ENCODE measurements at regions of chr12 and their contacts with region 1.

Region 1: DNA sequence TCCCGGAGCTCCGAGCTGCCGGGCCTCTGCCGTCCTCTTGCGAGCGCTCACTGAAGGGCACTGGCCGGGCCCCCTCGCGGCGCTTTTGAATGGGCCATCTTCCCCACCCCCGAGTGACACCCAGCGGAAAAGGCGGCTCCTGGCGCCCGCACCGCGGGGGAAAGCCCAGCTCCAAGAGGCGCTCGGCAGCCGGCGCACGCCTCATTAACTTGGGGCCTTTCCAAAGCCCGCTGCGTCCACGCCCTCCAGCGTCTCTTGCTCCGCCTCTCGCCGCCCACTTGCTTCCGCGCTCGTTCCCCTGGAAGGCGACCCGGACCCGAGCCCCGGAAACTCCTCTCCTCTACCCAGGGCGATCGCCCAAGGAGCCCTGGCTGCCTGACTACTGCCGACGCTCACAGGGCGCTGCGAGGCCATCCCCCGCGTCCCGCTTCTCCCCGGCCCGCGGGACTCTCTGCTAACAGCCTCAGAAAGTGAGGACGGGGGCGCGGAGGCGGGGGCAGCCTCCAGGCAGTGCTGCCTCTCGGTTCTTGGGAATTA is at the start of gene PHLDA1:
- DNase-seq: no peak
- ATAC-seq: peak; percentile 81
- H3K4me3 ChIP-seq: peak within 1 kb of the TSS; percentile 79 to 93
- H3K27ac ChIP-seq: peak within 1 kb of the TSS; percentile 100
- H3K4me1 ChIP-seq: peaks cover 32% of the 10 kb centered on the region
- H3K27me3 ChIP-seq: no peaks in the 10 kb centered on the region
- CTCF ChIP-seq: peak; percentile 65
- total RNA-seq, gene PHLDA1: 159 TPM

Region 2: GRCh38 chr12:75081305-75081704 is 950.3 kb before region 1 on chr12:
- CTCF ChIA-PET with region 1: no interaction called
- POLR2A ChIA-PET with region 1: interaction called, 12 read pairs
- in situ Hi-C with region 1: no loop called
- intact Hi-C with region 1: no loop called
- DNase-seq: no peak
- ATAC-seq: no peak
- H3K4me3 ChIP-seq: no peak overlapping the region
- H3K27ac ChIP-seq: no peak overlapping the region
- H3K4me1 ChIP-seq: no peaks in the 10 kb centered on the region
- H3K27me3 ChIP-seq: no peaks in the 10 kb centered on the region
- CTCF ChIP-seq: no peak

Region 3: DNA sequence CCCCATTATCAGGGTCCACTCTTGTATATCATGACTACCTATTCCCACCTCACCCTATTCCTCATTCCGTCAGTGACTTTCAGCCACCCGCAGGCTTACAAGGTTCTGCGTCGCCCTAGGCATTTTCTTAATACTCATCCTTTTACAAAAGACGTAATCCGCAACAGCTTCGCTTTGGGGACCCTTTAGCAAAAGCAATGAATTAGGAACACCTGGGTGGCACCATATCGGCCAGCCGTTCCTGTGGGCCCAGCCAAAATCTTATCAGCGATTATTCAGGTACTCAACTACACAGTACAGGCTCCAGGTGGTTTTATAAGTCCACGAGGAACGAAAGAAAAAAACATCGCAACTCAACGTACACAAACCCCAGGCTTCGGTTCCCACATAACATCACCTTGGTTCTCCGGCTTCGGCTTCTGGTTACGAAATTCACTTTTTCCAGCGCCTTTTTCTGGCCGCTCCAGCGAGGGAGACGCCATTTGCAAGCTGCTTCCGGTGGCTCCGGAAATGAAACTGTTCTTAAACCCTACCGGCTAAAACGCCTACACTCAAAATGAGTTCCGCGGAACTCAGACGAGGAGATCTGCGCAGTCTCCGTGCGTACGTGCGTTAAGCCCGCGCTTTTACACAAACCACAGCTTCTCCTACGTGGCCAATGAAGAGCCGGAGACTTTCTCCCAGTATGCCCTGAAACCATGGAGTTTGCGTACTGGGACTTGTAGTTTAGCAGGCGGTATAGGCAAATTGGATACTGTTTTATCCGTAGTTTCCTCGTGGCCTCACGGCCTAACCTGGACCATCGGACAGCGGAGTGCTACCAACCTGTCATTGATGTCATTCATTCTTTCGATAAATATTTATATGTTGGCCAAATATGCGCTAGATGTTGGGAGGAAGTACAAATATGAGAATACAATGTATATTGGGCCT is 520.2 kb before region 1 on chr12 and contains the start of gene KRR1:
- CTCF ChIA-PET with region 1: no interaction called
- POLR2A ChIA-PET with region 1: interaction called, 7 read pairs
- in situ Hi-C with region 1: no loop called
- intact Hi-C with region 1: loop called (anchors 5 kb)
- DNase-seq: peak; percentile 93
- ATAC-seq: peak; percentile 97
- H3K4me3 ChIP-seq: peak within 1 kb of the TSS; percentile 84 to 99
- H3K27ac ChIP-seq: peak within 1 kb of the TSS; percentile 100
- H3K4me1 ChIP-seq: peaks cover 38% of the 10 kb centered on the region
- H3K27me3 ChIP-seq: no peaks in the 10 kb centered on the region
- CTCF ChIP-seq: no peak
- total RNA-seq, gene KRR1: 161 TPM

Region 4: GRCh38 chr12:75526655-75527511 is 504.7 kb before region 1 on chr12:
- CTCF ChIA-PET with region 1: interaction called, 3 read pairs
- POLR2A ChIA-PET with region 1: interaction called, 3 read pairs
- in situ Hi-C with region 1: no loop called
- intact Hi-C with region 1: loop called (anchors 5 kb)
- DNase-seq: no peak
- ATAC-seq: peak; percentile 92
- H3K4me3 ChIP-seq: no peak overlapping the region
- H3K27ac ChIP-seq: peak overlapping the region; percentile 78
- H3K4me1 ChIP-seq: peaks cover 13% of the 10 kb centered on the region
- H3K27me3 ChIP-seq: no peaks in the 10 kb centered on the region
- CTCF ChIP-seq: peak; percentile 71

Region 5: DNA sequence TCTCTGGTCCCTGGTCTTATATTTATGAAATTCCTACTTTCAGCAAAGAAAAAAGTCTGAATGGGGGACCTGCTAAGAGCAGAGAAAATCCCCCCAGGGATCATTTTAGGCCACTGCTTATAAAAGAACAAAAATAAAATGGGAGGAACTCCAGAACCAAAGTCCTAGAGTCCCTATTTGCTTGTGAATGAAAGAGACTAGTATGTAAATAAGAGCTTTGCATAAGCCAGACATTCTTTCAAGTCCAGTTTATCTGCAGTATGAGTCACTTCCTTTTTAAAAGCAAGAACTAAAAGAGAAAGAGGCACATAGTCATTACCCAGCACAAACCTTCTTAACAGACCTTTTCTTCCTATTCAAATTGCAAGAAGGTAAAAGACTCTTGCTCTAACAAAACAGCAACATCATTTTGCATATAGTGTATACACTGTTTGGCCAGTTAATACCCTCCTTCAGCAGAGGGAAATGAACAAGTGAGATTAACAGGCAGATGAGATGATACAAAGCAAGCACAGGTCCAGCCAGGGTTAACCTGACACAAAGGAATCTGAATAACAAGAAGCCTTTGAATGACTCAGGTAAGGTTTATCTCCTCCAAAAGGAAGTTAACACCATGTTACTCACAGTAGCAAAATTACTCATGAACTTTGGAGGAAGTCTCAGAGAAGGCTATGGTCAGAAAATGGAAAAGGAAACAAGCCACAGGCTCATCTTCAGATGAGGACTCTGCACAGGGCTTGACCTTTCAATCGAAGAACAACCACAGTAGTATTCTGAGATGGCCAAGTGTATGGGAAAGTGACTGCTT is 87.3 kb before region 1 on chr12:
- CTCF ChIA-PET with region 1: no interaction called
- POLR2A ChIA-PET with region 1: no interaction called
- in situ Hi-C with region 1: no loop called
- intact Hi-C with region 1: no loop called
- DNase-seq: peak; percentile 88
- ATAC-seq: peak; percentile 92
- H3K4me3 ChIP-seq: no peak overlapping the region
- H3K27ac ChIP-seq: peak overlapping the region; percentile 99
- H3K4me1 ChIP-seq: peaks cover 34% of the 10 kb centered on the region
- H3K27me3 ChIP-seq: no peaks in the 10 kb centered on the region
- CTCF ChIP-seq: no peak

Measured in Panc1 (cell line).